A549 (cell line): ENCODE measurements at regions of chr6 and their contacts with region 1.

Region 1: DNA sequence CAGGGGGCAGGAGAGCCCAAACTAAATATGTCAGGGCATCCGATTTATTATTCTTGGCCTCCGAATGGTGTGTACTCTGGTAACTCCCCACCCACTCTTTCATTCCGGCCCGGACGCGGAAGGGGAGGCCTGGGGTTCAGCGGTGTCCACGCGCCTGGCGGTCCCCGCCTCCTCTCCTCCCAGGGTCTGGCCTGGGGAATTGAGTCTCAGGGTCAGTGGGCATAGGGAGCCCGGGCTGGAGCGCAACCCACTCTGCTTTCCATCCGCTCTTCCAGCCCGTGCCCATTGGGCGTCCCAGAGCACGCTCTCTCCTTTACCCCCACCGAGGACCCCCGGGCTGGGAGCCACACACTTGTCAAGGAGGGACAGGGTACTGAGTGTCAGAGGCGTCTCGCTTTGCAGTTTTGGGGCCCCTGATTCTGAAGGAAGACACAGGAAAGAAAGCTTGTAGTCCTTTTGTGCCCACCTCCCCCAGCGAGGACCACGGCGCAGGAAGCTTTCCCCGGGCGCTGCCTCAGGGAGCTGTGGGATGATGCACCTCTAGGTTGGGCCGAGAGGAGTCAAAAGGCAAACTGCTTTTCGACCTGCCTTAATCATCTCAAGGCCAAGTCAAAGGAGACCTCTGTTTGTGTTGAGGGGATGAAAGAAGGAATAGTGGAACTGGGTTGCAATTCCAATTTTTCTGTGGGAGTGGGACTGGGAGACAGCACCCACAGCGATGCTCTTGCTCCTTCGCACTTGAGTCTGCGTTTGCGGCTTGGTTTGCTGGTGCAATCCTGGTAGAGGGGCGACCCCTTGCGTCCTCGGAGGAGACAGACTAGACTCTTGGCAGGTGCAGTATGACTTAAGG is 2.5 kb downstream of the RSPO3 start:
- DNase-seq: peak; percentile 41 to 91
- ATAC-seq: peak; percentile 65 to 73
- H3K4me3 ChIP-seq: peak overlapping the region; percentile 90
- H3K27ac ChIP-seq: peak overlapping the region; percentile 98 to 100
- H3K4me1 ChIP-seq: peaks cover 34% of the 10 kb centered on the region
- CTCF ChIP-seq: peak; percentile 76
- EP300 ChIP-seq: no peak
- POLR2A ChIP-seq: no peak
- RAD21 ChIP-seq: peak; percentile 89 to 92

Region 2: GRCh38 chr6:126529637-126530362 is 591.2 kb before region 1 on chr6:
- CTCF ChIA-PET with region 1: no interaction called
- POLR2A ChIA-PET with region 1: interaction called, 12 read pairs
- DNase-seq: peak in 1 of 2 experiments; percentile 4
- ATAC-seq: peak in 1 of 2 experiments; percentile 53; a peak in 1 of 6 replicates
- H3K4me3 ChIP-seq: no peak overlapping the region
- H3K27ac ChIP-seq: no peak overlapping the region
- H3K4me1 ChIP-seq: no peaks in the 10 kb centered on the region
- CTCF ChIP-seq: no peak
- EP300 ChIP-seq: no peak
- POLR2A ChIP-seq: no peak
- RAD21 ChIP-seq: peak; percentile 11 to 40; a peak in 2 of 5 replicates

Region 3: DNA sequence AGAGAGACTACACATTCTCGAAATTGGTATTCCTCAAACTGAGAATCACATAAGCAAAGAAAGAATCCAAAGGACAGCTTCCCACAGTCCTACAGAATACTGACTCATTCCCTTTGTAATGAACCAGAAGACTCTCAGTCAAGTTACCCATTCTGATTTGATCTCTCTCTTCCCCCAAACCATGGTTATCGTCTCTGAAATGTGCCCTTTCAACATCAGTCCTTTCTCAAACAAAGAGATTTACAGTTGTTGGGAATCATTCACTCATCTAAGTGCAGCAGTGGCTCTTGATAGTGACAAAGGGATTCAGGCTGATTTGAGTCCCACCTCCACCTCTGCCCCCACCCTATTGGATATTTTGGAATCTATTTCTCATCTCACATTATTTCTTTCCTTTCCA is 17.5 kb before region 1 on chr6:
- CTCF ChIA-PET with region 1: interaction called, 13 read pairs
- POLR2A ChIA-PET with region 1: interaction called, 7 read pairs
- DNase-seq: peak in 1 of 2 experiments; percentile 85
- ATAC-seq: peak; percentile 60 to 79
- H3K4me3 ChIP-seq: no peak overlapping the region
- H3K27ac ChIP-seq: peak overlapping the region; percentile 89 to 93
- H3K4me1 ChIP-seq: peaks cover 75% of the 10 kb centered on the region
- CTCF ChIP-seq: no peak
- EP300 ChIP-seq: peak; percentile 51 to 68; a peak in 3 of 5 replicates
- POLR2A ChIP-seq: no peak
- RAD21 ChIP-seq: no peak; a peak in 1 of 5 replicates

Region 4: GRCh38 chr6:127131275-127131674 is 10.3 kb after region 1 on chr6:
- CTCF ChIA-PET with region 1: interaction called, 12 read pairs
- POLR2A ChIA-PET with region 1: no interaction called
- DNase-seq: no peak
- ATAC-seq: peak in 1 of 2 experiments; percentile 28; a peak in 3 of 6 replicates
- H3K4me3 ChIP-seq: no peak overlapping the region
- H3K27ac ChIP-seq: peak overlapping the region; percentile 21 to 57; a peak in 4 of 6 replicates
- H3K4me1 ChIP-seq: peaks cover 86% of the 10 kb centered on the region
- CTCF ChIP-seq: no peak
- EP300 ChIP-seq: no peak
- POLR2A ChIP-seq: no peak
- RAD21 ChIP-seq: no peak